CD8-positive, alpha-beta T cell (primary cell): ENCODE measurements at regions of chr1 and their contacts with region 1.

Region 1: DNA sequence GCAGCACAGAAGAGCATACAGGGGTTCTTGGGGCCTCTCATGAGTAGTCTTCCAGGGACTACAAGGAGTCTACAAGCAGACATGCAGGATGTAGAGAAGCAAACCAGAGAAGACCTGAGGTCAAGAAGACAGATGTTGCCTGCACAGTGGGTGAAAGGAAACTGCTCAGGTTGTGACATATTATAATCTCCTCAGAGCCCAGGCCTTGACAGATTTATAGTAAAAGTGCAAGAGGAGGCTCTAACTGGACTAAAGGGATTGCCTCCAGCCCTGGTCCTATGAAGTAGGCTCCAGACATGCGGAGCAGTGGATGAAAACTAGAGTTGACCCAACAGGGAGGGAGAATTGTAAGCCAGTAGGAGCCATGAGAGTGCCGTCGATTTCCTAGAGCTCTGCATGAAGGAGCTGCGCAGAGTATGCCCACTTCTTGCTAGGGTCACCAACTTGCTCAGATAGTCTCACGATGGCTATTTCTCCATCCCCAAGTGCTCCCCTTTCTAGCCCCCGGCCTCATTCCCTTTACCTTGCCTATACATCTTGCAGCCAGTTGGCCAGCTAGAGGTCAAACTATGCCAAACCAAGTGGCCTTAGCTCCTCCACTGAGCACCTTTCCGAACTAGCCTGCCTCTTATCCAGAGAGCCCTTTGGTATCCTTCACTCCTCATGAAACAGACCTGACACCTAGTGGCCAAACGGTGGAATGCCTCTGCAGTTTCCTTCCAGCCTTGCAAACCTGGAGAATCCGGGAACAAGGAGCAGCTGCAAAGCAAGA is 36.2 kb upstream of the IPO9 start:
- DNase-seq: peak in 8 of 9 experiments; percentile 6 to 62 (median 48)
- ATAC-seq: peak; percentile 46
- H3K4me3 ChIP-seq: no peak overlapping the region
- H3K4me3 Mint-ChIP-seq: no peak overlapping the region
- H3K27ac ChIP-seq: no peak overlapping the region
- H3K27ac Mint-ChIP-seq: no peak overlapping the region
- H3K4me1 ChIP-seq: no peaks in the 10 kb centered on the region
- H3K4me1 Mint-ChIP-seq: no peaks in the 10 kb centered on the region
- H3K27me3 ChIP-seq: no peaks in the 10 kb centered on the region
- H3K27me3 Mint-ChIP-seq: no peaks in the 10 kb centered on the region
- CTCF ChIP-seq: peak; percentile 89

Region 2: DNA sequence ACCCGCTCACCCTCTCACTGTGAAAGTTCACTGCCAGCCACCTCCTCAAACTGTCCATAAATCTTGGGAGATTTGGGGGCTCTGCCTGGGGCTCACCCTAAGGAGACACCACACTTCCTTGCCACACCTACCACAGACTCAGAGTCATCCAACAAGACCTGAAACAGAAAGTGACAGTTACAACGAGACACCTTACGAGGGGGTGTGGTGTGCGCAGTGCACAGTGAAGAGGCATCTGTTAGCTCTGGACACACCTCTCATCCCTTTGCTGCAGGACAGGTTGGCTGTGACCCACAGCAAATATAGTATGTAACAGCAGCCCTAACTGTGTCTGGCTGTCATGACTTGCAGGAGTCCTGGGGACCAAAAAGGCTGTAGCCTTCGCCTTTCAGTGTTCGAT is 1575.0 kb before region 1 on chr1:
- CTCF ChIA-PET with region 1: no interaction called
- POLR2A ChIA-PET with region 1: no interaction called
- intact Hi-C with region 1: no loop called
- DNase-seq: no peak
- ATAC-seq: no peak
- H3K4me3 ChIP-seq: no peak overlapping the region
- H3K4me3 Mint-ChIP-seq: no peak overlapping the region
- H3K27ac ChIP-seq: no peak overlapping the region
- H3K27ac Mint-ChIP-seq: no peak overlapping the region
- H3K4me1 ChIP-seq: no peaks in the 10 kb centered on the region
- H3K4me1 Mint-ChIP-seq: no peaks in the 10 kb centered on the region
- H3K27me3 ChIP-seq: no peaks in the 10 kb centered on the region
- H3K27me3 Mint-ChIP-seq: peaks cover 6% of the 10 kb centered on the region
- CTCF ChIP-seq: no peak

Region 3: DNA sequence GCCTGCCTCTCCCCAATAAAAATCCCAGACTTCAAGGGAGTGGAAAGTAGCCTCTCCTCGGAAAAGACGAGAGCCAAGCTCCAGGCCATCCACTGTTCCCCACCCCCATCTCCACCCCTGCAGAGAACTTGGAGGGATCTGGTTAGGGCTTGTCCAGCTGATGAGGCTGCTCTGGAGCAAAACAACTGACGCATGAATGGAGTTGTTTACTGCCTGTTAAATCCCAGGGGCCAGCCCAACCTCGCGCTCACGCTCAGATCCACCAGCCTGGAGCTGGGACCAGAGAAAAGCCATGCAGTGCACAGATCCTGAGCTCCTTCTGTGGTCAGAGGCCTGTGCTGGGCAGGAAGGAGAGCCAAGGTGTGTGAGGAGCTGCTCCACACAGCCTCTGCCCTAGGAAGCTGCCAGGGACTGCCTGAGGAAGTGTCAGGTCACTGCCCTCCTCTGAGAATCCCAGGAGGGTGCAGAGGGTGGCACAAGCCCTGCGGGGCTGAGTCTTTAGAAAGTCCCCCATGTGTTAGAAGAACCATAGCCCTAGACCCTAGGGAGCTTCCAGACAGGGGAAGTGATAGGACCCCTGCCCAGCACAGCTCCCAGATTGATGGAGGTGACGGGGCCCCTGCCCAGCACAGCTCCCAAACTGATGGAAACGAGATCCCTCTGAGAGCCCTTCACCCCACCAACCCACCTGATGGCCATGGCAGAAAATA is 72.8 kb before region 1 on chr1:
- CTCF ChIA-PET with region 1: interaction called, 151 read pairs
- POLR2A ChIA-PET with region 1: no interaction called
- intact Hi-C with region 1: no loop called
- DNase-seq: no peak
- ATAC-seq: no peak
- H3K4me3 ChIP-seq: no peak overlapping the region
- H3K4me3 Mint-ChIP-seq: no peak overlapping the region
- H3K27ac ChIP-seq: no peak overlapping the region
- H3K27ac Mint-ChIP-seq: no peak overlapping the region
- H3K4me1 ChIP-seq: no peaks in the 10 kb centered on the region
- H3K4me1 Mint-ChIP-seq: no peaks in the 10 kb centered on the region
- H3K27me3 ChIP-seq: no peaks in the 10 kb centered on the region
- H3K27me3 Mint-ChIP-seq: peaks cover 6% of the 10 kb centered on the region
- CTCF ChIP-seq: no peak

Region 4: GRCh38 chr1:201807958-201808632 is 15.4 kb after region 1 on chr1:
- CTCF ChIA-PET with region 1: interaction called, 12 read pairs
- POLR2A ChIA-PET with region 1: no interaction called
- intact Hi-C with region 1: no loop called
- DNase-seq: no peak
- ATAC-seq: no peak
- H3K4me3 ChIP-seq: no peak overlapping the region
- H3K4me3 Mint-ChIP-seq: no peak overlapping the region
- H3K27ac ChIP-seq: no peak overlapping the region
- H3K27ac Mint-ChIP-seq: no peak overlapping the region
- H3K4me1 ChIP-seq: no peaks in the 10 kb centered on the region
- H3K4me1 Mint-ChIP-seq: no peaks in the 10 kb centered on the region
- H3K27me3 ChIP-seq: no peaks in the 10 kb centered on the region
- H3K27me3 Mint-ChIP-seq: no peaks in the 10 kb centered on the region
- CTCF ChIP-seq: no peak

Region 5: GRCh38 chr1:201916649-201917249 is 124.0 kb after region 1 on chr1:
- CTCF ChIA-PET with region 1: no interaction called
- POLR2A ChIA-PET with region 1: no interaction called
- intact Hi-C with region 1: no loop called
- DNase-seq: no peak
- ATAC-seq: no peak
- H3K4me3 ChIP-seq: no peak overlapping the region
- H3K4me3 Mint-ChIP-seq: no peak overlapping the region
- H3K27ac ChIP-seq: no peak overlapping the region
- H3K27ac Mint-ChIP-seq: no peak overlapping the region
- H3K4me1 ChIP-seq: no peaks in the 10 kb centered on the region
- H3K4me1 Mint-ChIP-seq: no peaks in the 10 kb centered on the region
- H3K27me3 ChIP-seq: no peaks in the 10 kb centered on the region
- H3K27me3 Mint-ChIP-seq: peaks cover 20% of the 10 kb centered on the region
- CTCF ChIP-seq: no peak

Region 6: DNA sequence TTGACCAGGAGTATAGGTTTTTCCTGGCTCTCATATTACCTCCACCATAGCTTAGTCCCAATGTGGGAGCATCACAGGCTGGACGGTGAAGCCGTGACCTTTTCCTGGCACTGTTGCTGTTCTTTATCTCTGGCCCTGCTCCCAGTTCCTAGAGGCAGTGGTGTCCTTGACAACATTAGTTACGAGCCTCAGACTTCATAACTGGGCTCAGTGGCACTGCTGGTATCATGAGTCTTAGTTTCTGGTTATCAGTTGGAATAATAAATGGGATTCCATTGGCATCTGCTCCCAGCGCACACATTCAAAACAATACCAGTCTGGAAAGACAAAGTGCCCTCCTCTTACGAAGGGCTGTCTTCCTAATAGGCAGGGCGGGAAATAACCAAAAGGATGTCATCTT is 197.7 kb after region 1 on chr1:
- CTCF ChIA-PET with region 1: no interaction called
- POLR2A ChIA-PET with region 1: no interaction called
- intact Hi-C with region 1: no loop called
- DNase-seq: no peak
- ATAC-seq: no peak
- H3K4me3 ChIP-seq: no peak overlapping the region
- H3K4me3 Mint-ChIP-seq: no peak overlapping the region
- H3K27ac ChIP-seq: no peak overlapping the region
- H3K27ac Mint-ChIP-seq: no peak overlapping the region
- H3K4me1 ChIP-seq: no peaks in the 10 kb centered on the region
- H3K4me1 Mint-ChIP-seq: peaks cover 7% of the 10 kb centered on the region
- H3K27me3 ChIP-seq: no peaks in the 10 kb centered on the region
- H3K27me3 Mint-ChIP-seq: no peaks in the 10 kb centered on the region
- CTCF ChIP-seq: no peak

Region 7: DNA sequence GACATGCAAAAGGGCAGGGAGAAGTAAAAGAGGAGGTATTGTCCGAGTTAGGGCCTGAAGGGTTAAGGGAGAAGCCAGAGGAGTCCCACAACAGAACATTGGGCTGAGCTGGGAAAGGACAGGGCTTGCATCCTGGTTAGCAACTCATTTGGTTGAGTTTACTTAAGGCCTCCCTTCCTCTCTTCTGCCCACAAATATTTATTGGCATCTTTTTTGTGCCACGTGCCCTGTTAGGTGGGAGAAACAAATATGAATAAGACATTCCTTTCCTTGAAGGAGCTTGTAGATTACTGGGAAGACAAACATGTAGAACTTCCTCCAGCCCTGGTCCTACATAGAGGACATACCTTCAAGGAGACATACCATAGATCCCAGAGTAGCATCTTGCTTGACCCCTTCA is 1629.9 kb after region 1 on chr1:
- CTCF ChIA-PET with region 1: no interaction called
- POLR2A ChIA-PET with region 1: no interaction called
- intact Hi-C with region 1: no loop called
- DNase-seq: no peak
- ATAC-seq: no peak
- H3K4me3 ChIP-seq: no peak overlapping the region
- H3K4me3 Mint-ChIP-seq: no peak overlapping the region
- H3K27ac ChIP-seq: no peak overlapping the region
- H3K27ac Mint-ChIP-seq: no peak overlapping the region
- H3K4me1 ChIP-seq: no peaks in the 10 kb centered on the region
- H3K4me1 Mint-ChIP-seq: no peaks in the 10 kb centered on the region
- H3K27me3 ChIP-seq: peaks cover 0 to 2% of the 10 kb centered on the region in 2 experiments
- H3K27me3 Mint-ChIP-seq: peaks cover 26% of the 10 kb centered on the region
- CTCF ChIP-seq: no peak